Activated naive CD4-positive, alpha-beta T cell treated with anti-CD3 and anti-CD28 coated beads for 36 hours (primary cell): ENCODE measurements at regions of chr3 and their contacts with region 1.

Region 1: DNA sequence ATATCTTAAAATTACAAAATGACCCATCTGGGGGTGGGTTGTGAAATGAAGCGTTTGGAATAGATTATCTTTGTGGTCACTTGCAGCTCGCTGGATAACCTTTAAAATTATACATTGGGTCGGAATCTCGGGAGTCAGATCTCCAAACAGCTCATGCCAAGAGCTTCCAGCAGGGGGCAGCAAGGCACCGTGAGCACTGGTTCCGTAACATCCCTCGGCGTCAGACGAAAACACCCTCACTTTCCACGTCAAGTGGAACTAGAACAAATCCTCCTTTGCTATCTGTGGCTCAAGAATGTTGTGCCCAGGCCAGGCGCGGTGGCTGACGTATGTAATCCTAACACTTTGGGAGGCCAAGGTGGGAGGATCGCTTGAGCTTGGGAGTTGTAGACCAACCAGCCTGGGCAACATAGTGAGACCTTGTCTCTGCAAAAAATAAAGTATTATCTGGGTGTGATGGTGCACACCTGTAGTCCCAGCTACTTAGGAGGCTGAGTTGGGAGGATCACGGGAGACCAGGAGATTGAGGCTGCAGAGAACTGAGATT is 31.1 kb downstream of the UMPS start:
- DNase-seq: peak; percentile 87
- H3K4me3 Mint-ChIP-seq: peak overlapping the region; percentile 44
- H3K27ac Mint-ChIP-seq: no peak overlapping the region
- H3K4me1 Mint-ChIP-seq: peaks cover 7% of the 10 kb centered on the region
- H3K27me3 Mint-ChIP-seq: no peaks in the 10 kb centered on the region

Region 2: GRCh38 chr3:124730129-124730940 is 31.0 kb before region 1 on chr3 and contains the start of gene UMPS:
- CTCF ChIA-PET with region 1: interaction called, 11 read pairs
- intact Hi-C with region 1: no loop called
- DNase-seq: peak; percentile 96
- H3K4me3 Mint-ChIP-seq: peak within 1 kb of the TSS; percentile 99
- H3K27ac Mint-ChIP-seq: peak within 1 kb of the TSS; percentile 95
- H3K4me1 Mint-ChIP-seq: peaks cover 33% of the 10 kb centered on the region
- H3K27me3 Mint-ChIP-seq: peaks cover 7% of the 10 kb centered on the region
- total RNA-seq, gene UMPS: 29.6 to 34.1 TPM

Region 3: DNA sequence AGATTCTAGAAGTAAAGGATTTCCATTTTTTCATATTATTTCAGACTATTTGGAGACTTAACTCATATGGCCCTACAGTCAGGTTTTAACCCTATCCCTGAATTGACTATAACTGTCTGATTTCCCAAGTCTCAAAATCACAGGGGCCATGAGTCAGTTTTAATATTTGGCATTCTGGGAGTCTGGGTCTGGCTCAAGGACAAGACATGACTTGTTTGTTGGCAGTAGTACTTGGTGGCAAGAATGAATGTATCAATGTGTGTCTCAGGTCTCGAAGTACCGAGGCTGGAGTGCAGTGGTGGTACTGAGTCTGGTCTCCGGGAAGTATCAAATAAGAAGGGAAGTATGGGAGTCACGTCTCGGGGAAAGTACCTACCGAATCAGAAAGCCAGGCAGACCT is 20.3 kb before region 1 on chr3:
- CTCF ChIA-PET with region 1: interaction called, 15 read pairs
- intact Hi-C with region 1: no loop called
- DNase-seq: no peak
- H3K4me3 Mint-ChIP-seq: no peak overlapping the region
- H3K27ac Mint-ChIP-seq: no peak overlapping the region
- H3K4me1 Mint-ChIP-seq: peaks cover 20% of the 10 kb centered on the region
- H3K27me3 Mint-ChIP-seq: no peaks in the 10 kb centered on the region

Region 4: GRCh38 chr3:124895756-124896155 is 134.4 kb after region 1 on chr3:
- CTCF ChIA-PET with region 1: interaction called, 156 read pairs
- intact Hi-C with region 1: no loop called
- DNase-seq: no peak
- H3K4me3 Mint-ChIP-seq: no peak overlapping the region
- H3K27ac Mint-ChIP-seq: no peak overlapping the region
- H3K4me1 Mint-ChIP-seq: peaks cover 1% of the 10 kb centered on the region
- H3K27me3 Mint-ChIP-seq: peaks cover 1% of the 10 kb centered on the region

Region 5: GRCh38 chr3:124928333-124929202 is 167.2 kb after region 1 on chr3:
- CTCF ChIA-PET with region 1: interaction called, 13 read pairs
- intact Hi-C with region 1: no loop called
- DNase-seq: peak; percentile 82
- H3K4me3 Mint-ChIP-seq: no peak overlapping the region
- H3K27ac Mint-ChIP-seq: no peak overlapping the region
- H3K4me1 Mint-ChIP-seq: no peaks in the 10 kb centered on the region
- H3K27me3 Mint-ChIP-seq: peaks cover 3% of the 10 kb centered on the region

Region 6: GRCh38 chr3:124941771-124942170 is 180.4 kb after region 1 on chr3:
- CTCF ChIA-PET with region 1: no interaction called
- intact Hi-C with region 1: no loop called
- DNase-seq: no peak
- H3K4me3 Mint-ChIP-seq: no peak overlapping the region
- H3K27ac Mint-ChIP-seq: no peak overlapping the region
- H3K4me1 Mint-ChIP-seq: no peaks in the 10 kb centered on the region
- H3K27me3 Mint-ChIP-seq: peaks cover 2% of the 10 kb centered on the region

Region 7: DNA sequence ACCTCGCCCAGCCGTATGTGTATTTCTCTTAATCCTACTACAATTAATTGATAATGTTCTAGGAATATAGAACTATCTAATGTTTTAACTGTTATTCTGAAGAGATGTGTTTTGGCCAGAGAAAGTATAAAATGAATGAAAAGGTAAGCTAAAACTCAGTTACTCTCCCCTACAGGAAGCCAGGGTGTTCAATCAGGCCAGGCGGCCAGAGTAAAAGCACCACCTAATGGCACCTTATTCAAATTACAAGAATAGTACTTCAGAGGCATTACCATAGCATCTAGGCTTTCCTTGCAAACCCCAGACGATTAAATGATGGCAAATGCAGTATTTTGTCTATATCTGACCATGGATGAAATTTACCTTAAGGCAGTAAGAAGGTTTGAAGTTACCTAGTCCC is 440.9 kb after region 1 on chr3:
- CTCF ChIA-PET with region 1: no interaction called
- intact Hi-C with region 1: loop called (anchors 5 kb)
- DNase-seq: peak; percentile 42
- H3K4me3 Mint-ChIP-seq: no peak overlapping the region
- H3K27ac Mint-ChIP-seq: no peak overlapping the region
- H3K4me1 Mint-ChIP-seq: no peaks in the 10 kb centered on the region
- H3K27me3 Mint-ChIP-seq: peaks cover 3% of the 10 kb centered on the region

Region 8: DNA sequence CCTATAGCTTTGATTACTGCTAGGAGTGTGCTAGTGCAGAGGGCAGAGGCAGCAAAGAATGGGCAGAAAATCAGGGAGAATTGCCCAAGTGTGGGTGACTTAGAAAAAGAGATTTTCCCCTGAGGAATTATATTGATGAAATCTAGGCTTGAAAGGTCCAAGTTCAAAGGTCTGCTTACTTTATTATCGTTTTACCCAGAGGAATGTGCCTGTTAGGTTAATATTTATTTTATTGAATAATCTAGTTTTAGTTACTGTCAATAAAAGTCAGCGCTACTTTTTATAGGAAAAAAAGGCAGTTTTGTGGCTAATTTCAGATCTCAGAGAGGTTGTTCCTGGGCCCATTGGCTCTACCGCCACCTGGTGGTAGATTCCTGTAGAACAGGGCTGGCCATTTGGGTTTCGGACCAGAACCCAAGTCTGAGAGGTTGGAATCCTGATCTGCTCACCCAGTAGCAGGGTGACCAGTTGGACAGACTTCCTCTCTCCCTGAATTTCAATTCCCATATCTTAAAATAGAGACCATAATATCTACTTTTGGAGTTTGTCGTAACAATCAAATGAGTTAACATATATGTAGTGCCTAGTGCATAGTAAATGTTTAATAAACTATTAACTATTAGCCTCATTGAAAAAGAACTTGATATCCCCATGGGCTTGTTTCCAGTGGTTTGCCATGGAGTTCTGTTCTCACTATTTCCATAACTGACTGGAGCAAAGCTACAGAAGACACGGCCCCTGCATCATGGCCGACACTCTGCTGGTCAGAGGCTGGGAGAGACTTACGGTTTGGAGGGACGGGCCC is 676.5 kb after region 1 on chr3:
- CTCF ChIA-PET with region 1: interaction called, 3 read pairs
- intact Hi-C with region 1: loop called (anchors 2 kb)
- DNase-seq: peak; percentile 70
- H3K4me3 Mint-ChIP-seq: no peak overlapping the region
- H3K27ac Mint-ChIP-seq: no peak overlapping the region
- H3K4me1 Mint-ChIP-seq: no peaks in the 10 kb centered on the region
- H3K27me3 Mint-ChIP-seq: no peaks in the 10 kb centered on the region